A673 (cell line): ENCODE measurements at regions of chr1 and their contacts with region 1.

Region 1: DNA sequence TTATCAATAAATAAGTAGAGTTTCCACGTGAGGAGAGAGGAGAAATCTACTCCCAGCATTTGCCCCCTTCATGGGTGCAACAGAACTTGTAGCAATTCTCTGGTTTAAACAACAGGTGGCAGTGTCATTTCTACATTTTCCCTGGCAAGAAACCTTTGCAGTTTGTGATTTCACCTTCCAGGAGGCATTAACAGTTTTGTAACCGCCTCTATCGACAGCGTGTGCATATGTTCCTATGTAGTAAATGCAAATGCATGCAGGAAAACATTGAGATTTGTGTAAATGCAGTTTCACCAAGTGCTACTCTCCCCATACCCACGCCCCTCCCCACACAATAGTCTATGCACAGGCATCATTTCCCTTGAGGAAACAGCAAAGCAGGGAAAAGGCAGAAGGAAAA is 494.7 kb downstream of the SMYD3 start:
- DNase-seq: peak; percentile 55
- H3K4me3 ChIP-seq: no peak overlapping the region
- H3K27ac ChIP-seq: no peak overlapping the region
- H3K4me1 ChIP-seq: no peaks in the 10 kb centered on the region
- H3K27me3 ChIP-seq: no peaks in the 10 kb centered on the region
- CTCF ChIP-seq: peak; percentile 75

Region 2: GRCh38 chr1:246117066-246117791 is 104.9 kb after region 1 on chr1:
- CTCF ChIA-PET with region 1: no interaction called
- POLR2A ChIA-PET with region 1: no interaction called
- intact Hi-C with region 1: loop called (anchors 5 kb)
- DNase-seq: peak; percentile 40
- H3K4me3 ChIP-seq: no peak overlapping the region
- H3K27ac ChIP-seq: no peak overlapping the region
- H3K4me1 ChIP-seq: no peaks in the 10 kb centered on the region
- H3K27me3 ChIP-seq: no peaks in the 10 kb centered on the region
- CTCF ChIP-seq: peak; percentile 49

Region 3: DNA sequence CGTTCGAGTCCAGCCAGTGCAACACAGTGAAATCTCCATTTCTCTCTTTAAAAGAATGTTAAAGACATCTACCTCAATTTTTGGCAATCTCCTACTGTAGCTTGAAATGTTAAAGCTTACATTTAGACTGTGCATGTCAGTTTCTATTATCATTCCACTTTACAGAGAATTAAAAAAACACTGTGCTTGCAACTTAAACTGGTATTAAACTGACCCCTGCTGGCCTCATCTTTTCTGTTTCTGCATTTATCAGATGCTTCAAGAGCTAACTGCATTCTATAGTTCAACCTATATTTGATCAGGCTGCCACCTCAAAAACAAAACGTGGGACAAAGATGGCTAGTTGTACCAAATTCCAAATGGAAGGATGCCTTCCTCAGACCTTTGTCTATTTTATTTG is 268.2 kb after region 1 on chr1:
- CTCF ChIA-PET with region 1: no interaction called
- POLR2A ChIA-PET with region 1: no interaction called
- intact Hi-C with region 1: loop called (anchors 2 kb)
- DNase-seq: peak; percentile 28
- H3K4me3 ChIP-seq: no peak overlapping the region
- H3K27ac ChIP-seq: no peak overlapping the region
- H3K4me1 ChIP-seq: no peaks in the 10 kb centered on the region
- H3K27me3 ChIP-seq: no peaks in the 10 kb centered on the region
- CTCF ChIP-seq: peak; percentile 40

Region 4: DNA sequence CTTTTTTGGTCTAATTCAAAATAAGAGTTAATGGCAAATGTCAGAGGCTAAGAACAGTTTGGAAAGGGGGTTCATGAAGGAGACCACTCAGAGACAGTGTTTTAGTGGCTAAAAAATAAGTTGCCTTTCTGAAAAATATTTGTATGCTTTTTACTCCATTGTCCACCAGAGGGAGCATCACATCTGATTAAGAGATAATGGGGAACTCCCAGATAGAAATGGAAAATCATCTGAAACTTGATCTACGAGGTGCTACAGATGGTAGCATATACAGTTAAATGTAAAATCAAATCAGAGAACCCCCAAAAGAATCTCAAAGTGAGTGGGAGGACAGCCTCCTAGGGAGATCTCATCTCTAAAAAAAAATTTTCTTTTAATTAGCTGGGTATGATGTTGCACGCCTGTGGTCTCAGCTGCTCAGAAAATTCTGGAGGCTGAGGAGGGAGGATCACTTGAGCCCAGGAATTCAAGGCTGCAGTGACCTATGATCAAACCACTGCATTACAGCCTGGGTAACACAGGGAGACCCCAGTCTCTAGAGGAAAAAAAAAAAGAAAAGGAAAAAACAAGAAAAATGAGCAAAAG is 485.1 kb after region 1 on chr1:
- CTCF ChIA-PET with region 1: no interaction called
- POLR2A ChIA-PET with region 1: no interaction called
- intact Hi-C with region 1: loop called (anchors 5 kb)
- DNase-seq: peak; percentile 84
- H3K4me3 ChIP-seq: no peak overlapping the region
- H3K27ac ChIP-seq: no peak overlapping the region
- H3K4me1 ChIP-seq: no peaks in the 10 kb centered on the region
- H3K27me3 ChIP-seq: no peaks in the 10 kb centered on the region
- CTCF ChIP-seq: peak; percentile 85